Naive thymus-derived CD4-positive, alpha-beta T cell (primary cell): ENCODE measurements at regions of chr14 and their contacts with region 1.

Region 1: DNA sequence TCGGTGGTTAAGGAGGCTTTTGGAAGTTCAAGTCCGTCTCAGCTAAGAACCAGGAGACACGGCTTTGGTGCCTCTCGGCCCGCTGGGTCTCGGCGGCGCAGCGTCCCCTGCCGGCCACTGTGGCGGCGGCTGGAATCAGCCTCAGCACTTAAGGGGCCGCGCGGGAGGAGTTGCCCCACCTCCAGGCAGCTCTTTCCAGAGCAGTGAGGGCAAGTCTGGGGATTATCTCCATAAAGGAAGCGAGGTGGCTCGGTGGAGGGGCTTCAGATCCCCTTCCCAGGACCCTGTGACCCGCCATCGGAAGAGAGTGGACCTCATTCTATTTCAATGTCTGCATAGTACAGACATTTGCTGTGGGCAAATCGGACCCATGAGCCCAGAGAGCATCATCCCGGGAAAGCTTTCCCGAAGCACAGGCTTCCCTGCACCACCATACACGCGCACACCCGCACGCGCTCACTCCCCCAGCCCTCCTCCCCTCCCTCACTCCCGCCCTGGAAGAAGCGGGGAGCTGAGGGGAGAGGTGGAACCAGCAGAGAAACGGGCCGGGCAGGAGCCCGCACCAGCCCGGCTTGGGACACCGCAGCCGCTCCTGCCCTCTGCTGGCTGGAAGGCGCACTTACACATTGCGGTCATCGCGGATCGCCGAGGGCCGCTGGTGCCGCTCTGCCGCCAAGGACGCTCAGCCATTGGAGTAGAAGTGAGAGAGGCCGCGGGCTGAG is 15.9 kb downstream of the RNASE2 start:
- DNase-seq: peak; percentile 59 to 84 (median 74)
- ATAC-seq: peak; percentile 95
- H3K4me3 ChIP-seq: peak overlapping the region; percentile 92
- H3K4me3 Mint-ChIP-seq: peak overlapping the region; percentile 88 to 95 (median 92)
- H3K27ac ChIP-seq: peak overlapping the region; percentile 25
- H3K27ac Mint-ChIP-seq: peak overlapping the region in 5 of 9 donors; percentile 15 to 85 (median 60)
- H3K4me1 ChIP-seq: peaks cover 0 to 5% of the 10 kb centered on the region in 2 donors
- H3K4me1 Mint-ChIP-seq: peaks cover 5 to 17% (median 13%) of the 10 kb centered on the region in 7 donors
- H3K27me3 ChIP-seq: peaks cover 0 to 3% of the 10 kb centered on the region in 2 donors
- H3K27me3 Mint-ChIP-seq: peaks cover 20 to 44% (median 25%) of the 10 kb centered on the region in 5 donors

Region 2: DNA sequence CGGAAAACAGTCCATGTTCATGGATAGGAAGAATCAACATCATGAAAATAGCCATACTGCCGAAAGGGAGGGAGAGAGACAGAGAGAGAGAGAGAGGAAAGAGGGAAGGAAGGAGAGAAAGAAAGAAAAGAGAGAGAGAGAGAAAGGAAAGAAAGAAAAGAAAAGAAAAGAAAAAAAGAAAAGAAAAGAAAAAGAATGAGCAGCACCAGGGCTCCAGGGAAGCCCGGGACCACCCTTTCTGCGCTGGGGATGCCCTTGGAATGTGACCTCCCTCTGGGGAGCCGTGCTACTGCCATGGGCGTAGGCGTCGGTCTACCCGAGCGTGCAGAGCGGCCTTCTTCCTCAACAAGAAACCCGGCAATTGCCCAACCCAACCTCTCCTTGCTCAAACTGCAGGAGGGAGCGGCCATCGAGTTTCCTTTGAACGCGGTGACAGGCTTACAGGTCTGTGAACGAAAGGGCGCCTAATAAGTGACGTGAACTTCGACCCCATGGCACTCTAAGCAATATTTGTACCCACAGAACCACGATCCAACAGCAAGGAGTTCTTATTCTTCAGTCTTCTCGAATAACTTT is 346.6 kb before region 1 on chr14:
- CTCF ChIA-PET with region 1: no interaction called
- POLR2A ChIA-PET with region 1: no interaction called
- intact Hi-C with region 1: loop called in 1 of 2 experiments (anchors 10 kb)
- DNase-seq: peak in 6 of 9 donors; percentile 27 to 59 (median 36)
- ATAC-seq: peak; percentile 72
- H3K4me3 ChIP-seq: peak overlapping the region; percentile 46
- H3K4me3 Mint-ChIP-seq: peak overlapping the region; percentile 76 to 92 (median 84)
- H3K27ac ChIP-seq: no peak overlapping the region
- H3K27ac Mint-ChIP-seq: peak overlapping the region; percentile 77 to 96 (median 88)
- H3K4me1 ChIP-seq: peaks cover 0 to 32% of the 10 kb centered on the region in 2 donors
- H3K4me1 Mint-ChIP-seq: peaks cover 34 to 76% (median 70%) of the 10 kb centered on the region in 7 donors
- H3K27me3 ChIP-seq: no peaks in the 10 kb centered on the region
- H3K27me3 Mint-ChIP-seq: peaks cover 27 to 59% (median 40%) of the 10 kb centered on the region in 5 donors

Region 3: DNA sequence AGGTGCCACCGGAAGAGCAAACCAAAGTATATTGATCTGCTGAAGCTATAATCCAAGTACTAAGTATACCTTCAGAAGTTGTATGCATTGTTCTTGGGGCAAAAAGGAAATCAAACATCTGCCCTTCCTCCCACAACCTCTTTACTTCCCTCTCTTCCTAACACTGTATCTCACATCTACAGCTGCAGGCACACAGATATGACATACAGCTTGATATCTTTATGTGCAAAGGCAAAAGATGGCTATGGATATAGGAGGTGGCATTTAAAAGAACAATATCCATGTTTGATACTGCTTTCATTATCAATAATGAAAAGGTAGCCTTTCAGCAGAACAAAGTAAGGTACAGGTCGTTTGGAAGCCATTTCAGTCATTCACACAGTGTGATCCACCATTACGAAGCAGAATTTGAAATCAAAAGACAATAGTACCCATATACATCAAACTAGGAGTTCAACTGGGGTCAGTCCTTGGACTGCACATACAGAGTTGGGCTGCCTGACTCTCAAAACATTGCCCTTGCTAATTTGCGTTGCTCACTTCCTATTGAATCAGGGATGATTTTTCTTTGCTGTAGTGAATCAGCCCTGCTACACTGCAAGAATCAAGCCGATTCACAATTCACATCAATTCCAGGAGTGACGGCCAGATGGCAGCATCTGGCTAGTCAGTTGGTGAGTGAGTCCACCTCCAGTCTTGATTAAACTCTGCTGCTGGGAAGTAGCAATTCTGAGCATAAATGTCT is 273.7 kb before region 1 on chr14:
- CTCF ChIA-PET with region 1: interaction called, 5 read pairs
- POLR2A ChIA-PET with region 1: no interaction called
- intact Hi-C with region 1: loop called (anchors 1 kb)
- DNase-seq: peak; percentile 36 to 67 (median 57)
- ATAC-seq: peak; percentile 89
- H3K4me3 ChIP-seq: no peak overlapping the region
- H3K4me3 Mint-ChIP-seq: no peak overlapping the region
- H3K27ac ChIP-seq: no peak overlapping the region
- H3K27ac Mint-ChIP-seq: no peak overlapping the region
- H3K4me1 ChIP-seq: no peaks in the 10 kb centered on the region
- H3K4me1 Mint-ChIP-seq: peaks cover 0 to 1% (median 0%) of the 10 kb centered on the region in 7 donors
- H3K27me3 ChIP-seq: no peaks in the 10 kb centered on the region
- H3K27me3 Mint-ChIP-seq: peaks cover 0 to 15% (median 0%) of the 10 kb centered on the region in 5 donors

Region 4: DNA sequence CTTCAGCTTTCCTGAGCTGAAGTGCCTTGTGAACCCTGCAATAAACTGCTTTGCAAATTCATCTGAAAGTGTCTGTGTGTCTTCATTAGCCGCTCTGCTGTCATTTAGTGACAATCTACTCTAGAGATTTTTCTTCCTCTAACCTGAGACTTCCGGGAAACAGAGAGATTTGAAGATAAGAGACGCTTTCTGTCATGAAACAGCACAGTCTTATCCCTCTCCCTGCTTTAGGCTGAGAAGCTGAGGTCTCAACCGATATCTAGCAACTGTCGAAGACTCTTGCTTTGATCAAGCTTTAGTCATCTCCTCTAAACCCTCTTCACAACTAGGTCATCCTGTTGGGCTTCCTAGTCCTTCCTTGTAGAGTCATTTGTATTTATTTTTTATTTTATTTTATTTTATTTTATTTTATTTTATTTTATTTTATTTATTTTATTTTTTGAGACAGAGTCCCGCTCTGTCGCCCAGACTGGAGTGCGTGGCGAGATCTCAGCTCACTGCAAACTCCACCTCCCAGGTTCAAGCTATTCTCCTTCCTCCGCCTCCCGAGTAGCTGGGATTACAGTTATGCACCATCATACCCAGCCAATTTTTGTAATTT is 14.7 kb before region 1 on chr14:
- CTCF ChIA-PET with region 1: interaction called, 21 read pairs
- POLR2A ChIA-PET with region 1: interaction called, 3 read pairs
- intact Hi-C with region 1: loop called (anchors 1 kb)
- DNase-seq: peak in 6 of 9 donors; percentile 3 to 31 (median 25)
- ATAC-seq: peak; percentile 47
- H3K4me3 ChIP-seq: no peak overlapping the region
- H3K4me3 Mint-ChIP-seq: peak overlapping the region in 9 of 10 donors; percentile 26 to 76 (median 42)
- H3K27ac ChIP-seq: no peak overlapping the region
- H3K27ac Mint-ChIP-seq: peak overlapping the region in 7 of 9 donors; percentile 0 to 81 (median 9)
- H3K4me1 ChIP-seq: peaks cover 0 to under 1% of the 10 kb centered on the region in 2 donors
- H3K4me1 Mint-ChIP-seq: peaks cover 19 to 28% (median 22%) of the 10 kb centered on the region in 7 donors
- H3K27me3 ChIP-seq: no peaks in the 10 kb centered on the region
- H3K27me3 Mint-ChIP-seq: peaks cover 0 to 26% (median 18%) of the 10 kb centered on the region in 5 donors

Region 5: GRCh38 chr14:21039585-21040369 is 68.6 kb after region 1 on chr14:
- CTCF ChIA-PET with region 1: interaction called, 3 read pairs
- POLR2A ChIA-PET with region 1: no interaction called
- intact Hi-C with region 1: loop called in 1 of 2 experiments (anchors 2 kb)
- DNase-seq: peak in 7 of 9 donors; percentile 17 to 55 (median 46)
- ATAC-seq: peak; percentile 69
- H3K4me3 ChIP-seq: no peak overlapping the region
- H3K4me3 Mint-ChIP-seq: no peak overlapping the region
- H3K27ac ChIP-seq: no peak overlapping the region
- H3K27ac Mint-ChIP-seq: no peak overlapping the region
- H3K4me1 ChIP-seq: no peaks in the 10 kb centered on the region
- H3K4me1 Mint-ChIP-seq: peaks cover 2 to 9% (median 8%) of the 10 kb centered on the region in 7 donors
- H3K27me3 ChIP-seq: no peaks in the 10 kb centered on the region
- H3K27me3 Mint-ChIP-seq: peaks cover 3 to 31% (median 11%) of the 10 kb centered on the region in 5 donors